Dorsolateral prefrontal cortex (tissue), 120 donors: ENCODE measurements at regions of chr9 and their contacts with region 1.

Region 1: DNA sequence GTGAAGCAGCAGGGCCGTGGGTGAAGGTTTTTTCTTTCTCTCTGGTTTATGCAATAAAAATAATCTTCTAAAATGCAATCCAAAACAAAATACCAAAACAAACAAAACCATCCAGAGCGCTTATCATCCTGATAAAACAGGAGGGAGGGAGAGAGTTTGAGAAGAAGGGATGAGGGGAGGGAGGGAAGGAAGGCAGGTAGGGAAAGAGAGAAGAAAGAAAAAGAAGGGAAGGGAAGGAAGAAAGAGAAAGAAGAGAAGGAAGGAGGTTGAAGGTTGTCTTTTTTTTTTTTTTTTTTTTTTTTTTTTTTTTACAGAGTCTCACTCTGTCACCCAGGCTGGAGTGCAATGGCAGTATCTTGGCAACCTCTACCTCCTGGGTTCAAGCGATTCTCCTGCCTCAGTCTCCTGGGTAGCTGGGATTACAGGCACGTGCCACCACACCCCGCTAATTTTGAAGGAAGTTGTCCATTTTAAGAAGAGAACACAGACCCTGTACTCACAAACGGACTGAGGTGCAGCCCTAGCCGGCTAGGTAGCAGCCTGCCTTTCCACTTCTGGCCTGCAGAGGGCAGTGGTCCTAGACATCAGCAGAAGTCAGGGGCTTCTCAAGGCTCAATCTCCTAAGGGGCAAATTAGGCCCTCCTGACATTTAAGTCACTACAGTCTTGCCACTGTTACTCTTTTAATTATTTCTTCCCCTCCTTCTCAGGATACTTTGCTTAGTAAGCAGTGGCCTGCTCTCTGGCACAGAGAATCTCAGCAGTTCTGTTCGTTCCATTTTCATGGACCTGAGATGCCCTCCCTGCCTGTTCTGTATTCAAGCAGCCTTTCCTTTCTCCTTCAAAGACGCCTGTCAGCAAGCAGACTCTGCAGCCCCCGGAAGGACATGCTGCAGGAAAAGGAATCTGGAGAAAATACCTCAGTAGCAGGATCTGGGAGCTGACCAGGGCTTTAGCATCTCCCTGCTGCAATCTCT is 76.4 kb downstream of the EPB41L4B start:
- DNase-seq: peak; percentile 63 to 83 (median 78)
- H3K4me3 ChIP-seq: no peak overlapping the region
- H3K27ac ChIP-seq: peak overlapping the region in 6 of 59 donors; percentile 7 to 54 (median 22)
- H3K27me3 ChIP-seq: no peaks in the 10 kb centered on the region
- CTCF ChIP-seq: peak; percentile 60 to 98 (median 94)

Region 2: GRCh38 chr9:109401168-109401989 is 156.9 kb after region 1 on chr9:
- intact Hi-C with region 1: loop called in 1 of 2 experiments (anchors 5 kb)
- DNase-seq: peak in 5 of 10 donors; percentile 10 to 56 (median 42)
- H3K4me3 ChIP-seq: no peak overlapping the region
- H3K27ac ChIP-seq: no peak overlapping the region
- H3K27me3 ChIP-seq: peaks cover 0 to 3% (median 0%) of the 10 kb centered on the region in 45 donors
- CTCF ChIP-seq: peak; percentile 39 to 84 (median 70)

Region 3: GRCh38 chr9:109463924-109464625 is 219.6 kb after region 1 on chr9:
- intact Hi-C with region 1: no loop called
- DNase-seq: no peak
- H3K4me3 ChIP-seq: no peak overlapping the region
- H3K27ac ChIP-seq: no peak overlapping the region
- H3K27me3 ChIP-seq: no peaks in the 10 kb centered on the region
- CTCF ChIP-seq: no peak

Region 4: GRCh38 chr9:109517901-109518377 is 273.5 kb after region 1 on chr9:
- intact Hi-C with region 1: loop called in 1 of 2 experiments (anchors 10 kb)
- DNase-seq: no peak
- H3K4me3 ChIP-seq: no peak overlapping the region
- H3K27ac ChIP-seq: no peak overlapping the region
- H3K27me3 ChIP-seq: peaks cover 0 to 4% (median 0%) of the 10 kb centered on the region in 45 donors
- CTCF ChIP-seq: no peak